Activated CD4-positive, alpha-beta T cell treated with anti-CD3 and anti-CD28 coated beads for 36 hours (primary cell): ENCODE measurements at regions of chr16 and their contacts with region 1.

Region 1: GRCh38 chr16:28082624-28083023 is 19.1 kb upstream of the GSG1L start:
- DNase-seq: no peak
- ATAC-seq: no peak
- H3K4me3 Mint-ChIP-seq: no peak overlapping the region
- H3K27ac Mint-ChIP-seq: no peak overlapping the region
- H3K4me1 Mint-ChIP-seq: no peaks in the 10 kb centered on the region
- H3K27me3 Mint-ChIP-seq: no peaks in the 10 kb centered on the region

Region 2: GRCh38 chr16:28098959-28099945 is 16.6 kb after region 1 on chr16:
- CTCF ChIA-PET with region 1: no interaction called
- POLR2A ChIA-PET with region 1: no interaction called
- intact Hi-C with region 1: loop called in 1 of 2 experiments (anchors 1 kb)
- DNase-seq: no peak
- ATAC-seq: no peak
- H3K4me3 Mint-ChIP-seq: no peak overlapping the region
- H3K27ac Mint-ChIP-seq: no peak overlapping the region
- H3K4me1 Mint-ChIP-seq: no peaks in the 10 kb centered on the region
- H3K27me3 Mint-ChIP-seq: no peaks in the 10 kb centered on the region